MCF 10A (cell line): ENCODE measurements at regions of chr4 and their contacts with region 1.

Region 1: DNA sequence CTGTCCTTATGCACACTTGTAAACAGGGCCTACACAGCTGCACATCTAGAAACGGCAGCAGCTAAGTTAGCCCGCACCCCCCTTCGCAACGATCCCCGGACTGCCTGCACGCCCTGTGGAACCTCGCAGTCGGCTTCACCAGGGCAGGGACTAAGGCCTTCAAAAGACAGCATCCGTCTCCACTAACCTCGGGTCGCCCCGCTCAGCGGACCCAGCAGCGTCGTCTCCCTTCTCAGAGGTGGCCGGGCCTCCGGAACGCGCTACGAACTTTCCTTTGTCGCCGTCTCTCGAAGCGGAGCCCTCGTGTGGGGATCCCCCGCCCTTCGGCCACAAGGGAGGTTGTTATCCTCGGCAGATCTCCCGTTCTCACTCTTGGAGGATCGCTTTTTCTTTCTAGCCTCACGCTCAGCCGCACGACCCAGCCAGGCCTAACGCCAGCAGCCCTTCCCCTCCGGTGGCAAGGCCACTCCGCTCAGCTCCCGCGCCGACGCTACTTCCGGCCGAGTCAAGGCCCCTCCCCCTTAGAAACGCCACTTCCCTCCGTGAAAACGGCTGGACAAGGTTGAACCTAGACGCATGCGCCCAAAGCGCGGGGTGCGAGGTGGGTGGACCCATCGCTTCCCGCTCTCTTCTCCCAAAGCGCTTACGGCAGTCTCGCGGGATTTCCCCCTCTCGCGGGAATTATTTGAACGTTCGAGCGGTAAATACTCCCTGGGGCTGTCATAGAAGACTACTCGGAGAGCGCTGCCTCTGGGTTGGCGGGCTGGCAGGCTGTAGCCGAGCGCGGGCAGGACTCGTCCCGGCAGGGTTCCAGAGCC is at the starts of genes DCAF16 and NCAPG:
- DNase-seq: peak; percentile 100
- H3K4me3 Mint-ChIP-seq: peak within 1 kb of the TSS; percentile 89
- H3K27ac Mint-ChIP-seq: peak within 1 kb of the TSS; percentile 98
- H3K4me1 Mint-ChIP-seq: peaks cover 38% of the 10 kb centered on the region
- H3K27me3 Mint-ChIP-seq: no peaks in the 10 kb centered on the region
- CTCF ChIP-seq: no peak
- total RNA-seq, gene DCAF16: 38.0 and 41.4 TPM in 2 replicates
- total RNA-seq, gene NCAPG: 23.2 and 38.6 TPM in 2 replicates

Region 2: GRCh38 chr4:17544205-17544604 is 266.3 kb before region 1 on chr4:
- CTCF ChIA-PET with region 1: interaction called, 50 read pairs
- POLR2A ChIA-PET with region 1: interaction called, 15 read pairs
- intact Hi-C with region 1: loop called (anchors 1 kb)
- DNase-seq: no peak
- H3K4me3 Mint-ChIP-seq: no peak overlapping the region
- H3K27ac Mint-ChIP-seq: no peak overlapping the region
- H3K4me1 Mint-ChIP-seq: no peaks in the 10 kb centered on the region
- H3K27me3 Mint-ChIP-seq: peaks cover 11% of the 10 kb centered on the region
- CTCF ChIP-seq: no peak

Region 3: GRCh38 chr4:17597517-17597916 is 213.0 kb before region 1 on chr4:
- CTCF ChIA-PET with region 1: interaction called, 9 read pairs
- POLR2A ChIA-PET with region 1: no interaction called
- intact Hi-C with region 1: loop called (anchors 1 kb)
- DNase-seq: peak; percentile 35
- H3K4me3 Mint-ChIP-seq: no peak overlapping the region
- H3K27ac Mint-ChIP-seq: no peak overlapping the region
- H3K4me1 Mint-ChIP-seq: no peaks in the 10 kb centered on the region
- H3K27me3 Mint-ChIP-seq: no peaks in the 10 kb centered on the region
- CTCF ChIP-seq: peak; percentile 32

Region 4: GRCh38 chr4:17636696-17637622 is 173.5 kb before region 1 on chr4:
- CTCF ChIA-PET with region 1: no interaction called
- POLR2A ChIA-PET with region 1: no interaction called
- intact Hi-C with region 1: loop called (anchors 5 kb)
- DNase-seq: peak; percentile 80
- H3K4me3 Mint-ChIP-seq: no peak overlapping the region
- H3K27ac Mint-ChIP-seq: no peak overlapping the region
- H3K4me1 Mint-ChIP-seq: no peaks in the 10 kb centered on the region
- H3K27me3 Mint-ChIP-seq: no peaks in the 10 kb centered on the region
- CTCF ChIP-seq: peak; percentile 79

Region 5: DNA sequence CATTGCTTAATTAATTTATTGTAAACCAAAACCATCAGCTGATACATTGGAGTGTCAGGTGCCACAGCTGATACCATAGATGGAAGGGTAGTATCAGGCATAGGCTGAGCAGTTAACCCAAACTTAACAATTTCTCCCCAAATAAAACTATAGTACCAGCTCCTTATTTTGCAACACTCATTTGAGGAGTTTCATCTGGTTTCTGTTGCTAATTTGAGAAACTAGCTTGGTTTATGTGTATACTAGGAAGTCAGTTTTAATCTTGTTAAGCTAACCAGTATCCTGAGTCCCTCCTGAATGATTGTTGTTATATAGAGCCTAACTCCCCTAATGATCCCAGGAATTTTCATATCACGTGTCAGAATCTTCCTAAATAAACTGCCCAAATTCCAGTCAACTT is 12.7 kb before region 1 on chr4:
- CTCF ChIA-PET with region 1: interaction called, 8 read pairs
- POLR2A ChIA-PET with region 1: interaction called, 36 read pairs
- intact Hi-C with region 1: no loop called
- DNase-seq: no peak
- H3K4me3 Mint-ChIP-seq: no peak overlapping the region
- H3K27ac Mint-ChIP-seq: no peak overlapping the region
- H3K4me1 Mint-ChIP-seq: peaks cover 6% of the 10 kb centered on the region
- H3K27me3 Mint-ChIP-seq: no peaks in the 10 kb centered on the region
- CTCF ChIP-seq: no peak